Activated CD4-positive, alpha-beta T cell treated with anti-CD3 and anti-CD28 coated beads for 36 hours (primary cell): ENCODE measurements at regions of chr6 and their contacts with region 1.

Region 1: GRCh38 chr6:136643850-136644596 is 93.8 kb upstream of the MAP7 start:
- DNase-seq: peak; percentile 90
- ATAC-seq: peak; percentile 57
- H3K4me3 Mint-ChIP-seq: no peak overlapping the region
- H3K27ac Mint-ChIP-seq: no peak overlapping the region
- H3K4me1 Mint-ChIP-seq: no peaks in the 10 kb centered on the region
- H3K27me3 Mint-ChIP-seq: no peaks in the 10 kb centered on the region

Region 2: GRCh38 chr6:136582711-136583471 is 61.1 kb before region 1 on chr6:
- CTCF ChIA-PET with region 1: interaction called, 5 read pairs
- POLR2A ChIA-PET with region 1: no interaction called
- intact Hi-C with region 1: loop called in 1 of 2 experiments (anchors 2 kb)
- DNase-seq: no peak
- ATAC-seq: no peak
- H3K4me3 Mint-ChIP-seq: no peak overlapping the region
- H3K27ac Mint-ChIP-seq: no peak overlapping the region
- H3K4me1 Mint-ChIP-seq: no peaks in the 10 kb centered on the region
- H3K27me3 Mint-ChIP-seq: no peaks in the 10 kb centered on the region

Region 3: GRCh38 chr6:136655239-136656014 is 11.4 kb after region 1 on chr6:
- CTCF ChIA-PET with region 1: interaction called, 16 read pairs
- POLR2A ChIA-PET with region 1: no interaction called
- intact Hi-C with region 1: no loop called
- DNase-seq: no peak
- ATAC-seq: no peak
- H3K4me3 Mint-ChIP-seq: no peak overlapping the region
- H3K27ac Mint-ChIP-seq: no peak overlapping the region
- H3K4me1 Mint-ChIP-seq: no peaks in the 10 kb centered on the region
- H3K27me3 Mint-ChIP-seq: no peaks in the 10 kb centered on the region

Region 4: DNA sequence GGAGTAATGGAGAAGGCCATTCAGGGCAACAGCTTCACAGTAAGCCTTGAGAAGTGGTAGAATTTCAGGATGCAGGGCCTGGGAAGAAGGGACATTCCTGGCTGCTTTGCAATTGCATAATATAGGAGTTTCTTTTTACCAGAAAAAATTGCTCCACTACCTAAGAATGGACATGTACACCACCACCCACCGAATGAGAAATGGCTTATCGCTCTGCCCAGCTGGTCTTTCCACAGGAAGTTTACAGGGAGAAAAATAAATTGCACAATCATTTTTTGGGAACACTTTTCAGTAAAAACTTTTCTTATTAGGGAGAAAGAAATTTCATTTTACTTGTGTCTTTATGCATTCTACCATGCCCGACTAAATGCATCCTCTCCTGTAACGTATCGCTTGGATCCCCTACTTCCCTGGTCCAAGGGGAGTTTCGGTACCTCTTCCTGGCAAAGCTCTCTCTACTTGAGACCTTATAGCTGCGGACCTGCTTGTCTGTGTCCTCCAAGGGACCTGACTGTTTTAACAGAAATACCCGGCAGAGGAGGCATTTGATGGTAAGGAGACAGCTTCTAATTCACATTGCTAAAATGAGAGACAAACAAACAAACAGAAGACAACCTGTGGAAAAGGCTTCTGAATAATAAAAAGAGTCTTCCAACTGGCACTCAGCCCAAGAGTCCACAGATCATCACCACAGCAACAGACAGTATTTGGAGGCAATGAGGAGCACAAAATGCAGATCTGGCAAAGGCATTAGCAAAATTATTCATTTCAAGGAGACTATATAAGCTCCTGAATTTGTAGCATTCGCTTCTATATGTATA is 94.1 kb after region 1 on chr6:
- CTCF ChIA-PET with region 1: interaction called, 11 read pairs
- POLR2A ChIA-PET with region 1: no interaction called
- intact Hi-C with region 1: no loop called
- DNase-seq: no peak
- ATAC-seq: no peak
- H3K4me3 Mint-ChIP-seq: no peak overlapping the region
- H3K27ac Mint-ChIP-seq: no peak overlapping the region
- H3K4me1 Mint-ChIP-seq: peaks cover 6% of the 10 kb centered on the region
- H3K27me3 Mint-ChIP-seq: no peaks in the 10 kb centered on the region

Region 5: DNA sequence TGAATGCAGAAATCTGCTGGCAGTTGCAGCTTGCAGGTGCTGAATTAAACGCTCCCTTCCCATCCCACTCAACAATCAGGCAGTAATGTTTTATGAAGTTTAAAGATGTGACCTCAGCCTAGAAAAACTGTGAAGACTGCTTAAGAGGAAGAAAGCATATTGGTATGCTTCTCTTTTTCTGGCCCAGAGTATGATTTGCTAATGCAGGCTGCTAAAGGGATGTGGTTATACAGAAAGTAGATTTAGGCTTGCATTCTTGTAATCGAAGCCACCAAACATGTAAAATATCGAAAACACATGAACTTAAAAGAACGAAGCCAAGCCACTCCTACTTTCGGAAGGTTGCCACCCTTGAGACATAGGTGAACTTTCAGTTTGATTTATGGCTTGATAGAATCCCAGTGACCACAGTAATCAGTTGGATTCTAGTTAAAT is 107.5 kb after region 1 on chr6:
- CTCF ChIA-PET with region 1: interaction called, 11 read pairs
- POLR2A ChIA-PET with region 1: no interaction called
- intact Hi-C with region 1: loop called in 1 of 2 experiments (anchors 5 kb)
- DNase-seq: peak; percentile 46
- ATAC-seq: peak; percentile 72
- H3K4me3 Mint-ChIP-seq: peak overlapping the region; percentile 42
- H3K27ac Mint-ChIP-seq: peak overlapping the region; percentile 63
- H3K4me1 Mint-ChIP-seq: peaks cover 68% of the 10 kb centered on the region
- H3K27me3 Mint-ChIP-seq: no peaks in the 10 kb centered on the region

Region 6: DNA sequence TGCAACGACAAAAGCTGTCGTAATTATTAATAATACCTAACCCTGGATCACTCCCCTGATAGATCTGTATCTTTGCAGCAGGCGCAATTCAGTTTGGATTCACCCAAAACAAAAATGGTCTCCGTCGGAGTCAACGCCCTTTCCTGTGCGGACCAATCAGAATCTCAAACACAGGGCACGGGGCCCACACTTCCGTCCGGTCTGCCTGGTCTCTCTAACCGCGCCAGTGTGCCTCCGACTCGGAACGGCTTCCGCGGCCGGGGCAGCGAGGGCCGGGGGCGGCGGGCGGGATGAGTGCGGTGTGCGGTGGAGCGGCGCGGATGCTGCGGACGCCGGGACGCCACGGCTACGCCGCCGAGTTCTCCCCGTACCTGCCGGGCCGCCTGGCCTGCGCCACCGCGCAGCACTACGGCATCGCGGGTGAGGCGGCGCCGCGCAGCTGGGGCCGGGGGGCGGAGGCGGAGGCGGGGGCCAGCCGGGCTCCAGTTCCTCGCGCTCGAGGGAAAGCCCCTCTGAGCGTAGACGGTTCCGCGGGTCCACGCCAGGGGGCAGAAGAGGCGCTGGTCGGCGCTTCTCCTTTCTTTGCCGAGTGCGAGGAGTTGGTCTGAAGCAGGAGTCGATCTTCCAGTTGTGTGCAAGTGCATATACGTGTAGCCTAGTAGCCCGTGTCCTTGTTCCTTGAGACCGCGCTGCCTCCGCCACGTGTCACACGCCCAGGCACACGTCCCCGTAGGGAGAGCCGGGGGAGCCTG is 178.5 kb after region 1 on chr6 and contains the start of gene PEX7:
- CTCF ChIA-PET with region 1: interaction called, 6 read pairs
- POLR2A ChIA-PET with region 1: no interaction called
- intact Hi-C with region 1: loop called in 1 of 2 experiments (anchors 1 kb)
- DNase-seq: peak; percentile 94
- ATAC-seq: peak; percentile 95
- H3K4me3 Mint-ChIP-seq: peak within 1 kb of the TSS; percentile 82
- H3K27ac Mint-ChIP-seq: peak within 1 kb of the TSS; percentile 94
- H3K4me1 Mint-ChIP-seq: peaks cover 24% of the 10 kb centered on the region
- H3K27me3 Mint-ChIP-seq: no peaks in the 10 kb centered on the region
- total RNA-seq, gene PEX7: 3.6 to 4.9 TPM